Thyroid gland (tissue), 4 donors: ENCODE measurements at regions of chr19 and their contacts with region 1.

Region 1: GRCh38 chr19:35648017-35648961 is at the start of gene COX6B1:
- DNase-seq: peak; percentile 96 to 97
- H3K4me3 ChIP-seq: peak within 1 kb of the TSS; percentile 30 to 95 (median 64)
- H3K27ac ChIP-seq: peak within 1 kb of the TSS; percentile 11 to 71 (median 69)
- H3K4me1 ChIP-seq: peaks cover 15 to 21% of the 10 kb centered on the region in 2 donors
- H3K27me3 ChIP-seq: no peaks in the 10 kb centered on the region
- CTCF ChIP-seq: no peak
- POLR2A ChIP-seq: peak in 1 of 2 donors; percentile 80
- total RNA-seq, gene COX6B1: 139 to 941 (median 369) TPM

Region 2: DNA sequence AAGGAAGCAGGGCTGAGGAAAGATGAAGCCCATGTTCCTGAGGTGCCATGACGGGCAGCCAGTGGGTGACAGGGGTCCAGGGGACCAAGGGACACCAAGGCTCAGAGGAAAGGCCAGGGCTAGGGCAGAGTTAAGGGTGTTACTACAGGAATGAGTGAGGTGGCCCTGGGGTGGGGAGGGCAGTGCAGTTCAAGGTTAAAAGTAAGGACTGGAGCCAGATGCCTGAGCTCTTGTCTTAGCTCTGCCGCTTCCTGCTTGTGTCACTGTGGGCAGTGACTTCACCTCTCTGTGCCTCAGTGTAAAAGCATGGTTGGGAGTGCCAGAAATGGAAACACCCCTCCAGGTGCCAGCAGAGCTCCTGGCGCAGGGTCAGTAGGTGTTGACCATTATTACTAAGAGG is 11.6 kb before region 1 on chr19:
- intact Hi-C with region 1: loop called (anchors 2 kb)
- DNase-seq: no peak
- H3K4me3 ChIP-seq: no peak overlapping the region
- H3K27ac ChIP-seq: no peak overlapping the region
- H3K4me1 ChIP-seq: peaks cover 0 to 4% of the 10 kb centered on the region in 2 donors
- H3K27me3 ChIP-seq: no peaks in the 10 kb centered on the region
- CTCF ChIP-seq: no peak
- POLR2A ChIP-seq: no peak